ENCODE measurements at regions of chr3 and their contacts with region 1.

Region 1: DNA sequence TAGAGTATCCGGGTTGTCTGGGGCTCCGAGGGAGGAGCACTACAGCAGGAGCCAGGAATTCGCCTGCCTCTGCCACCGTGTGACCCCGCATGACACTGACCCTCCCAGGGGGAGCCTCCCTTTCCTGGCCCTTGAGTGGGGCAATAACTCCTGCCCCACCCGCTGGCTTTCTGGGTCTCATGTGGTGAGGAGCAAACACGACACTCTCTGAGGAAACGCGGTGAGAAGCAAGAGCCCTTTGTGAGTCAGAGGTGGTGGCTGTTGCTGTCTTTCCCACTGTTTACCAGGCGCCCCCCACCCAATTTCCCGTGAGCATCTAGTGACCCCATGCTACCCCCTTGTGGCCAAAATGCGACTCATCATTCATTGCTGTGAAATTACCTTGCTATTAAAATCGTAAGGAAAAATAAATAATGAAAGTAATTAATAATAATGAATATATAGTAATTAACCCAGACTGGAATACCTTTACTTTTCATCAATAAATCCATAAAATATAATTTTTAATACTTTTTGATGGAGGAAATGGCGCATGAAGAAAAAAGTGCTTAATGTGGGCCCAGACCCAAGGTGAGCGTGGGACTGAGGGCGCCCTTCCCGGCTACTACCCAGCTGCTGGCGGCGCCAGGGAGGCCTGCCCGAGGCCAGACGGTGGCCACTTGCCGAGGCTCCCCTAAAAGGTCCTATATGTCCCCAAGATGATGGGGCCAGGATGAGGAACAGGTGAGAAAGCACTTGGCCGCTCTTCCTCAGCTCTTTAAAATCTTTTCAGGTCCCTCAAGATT is 29.3 kb downstream of the CCNL1 start:
- DNase-seq: peak; percentile 94
- H3K4me3 ChIP-seq: no peak overlapping the region
- H3K27ac ChIP-seq: peak overlapping the region; percentile 94
- H3K4me1 ChIP-seq: peaks cover 27% of the 10 kb centered on the region
- H3K27me3 ChIP-seq: no peaks in the 10 kb centered on the region
- CTCF ChIP-seq: peak; percentile 56

Region 2: DNA sequence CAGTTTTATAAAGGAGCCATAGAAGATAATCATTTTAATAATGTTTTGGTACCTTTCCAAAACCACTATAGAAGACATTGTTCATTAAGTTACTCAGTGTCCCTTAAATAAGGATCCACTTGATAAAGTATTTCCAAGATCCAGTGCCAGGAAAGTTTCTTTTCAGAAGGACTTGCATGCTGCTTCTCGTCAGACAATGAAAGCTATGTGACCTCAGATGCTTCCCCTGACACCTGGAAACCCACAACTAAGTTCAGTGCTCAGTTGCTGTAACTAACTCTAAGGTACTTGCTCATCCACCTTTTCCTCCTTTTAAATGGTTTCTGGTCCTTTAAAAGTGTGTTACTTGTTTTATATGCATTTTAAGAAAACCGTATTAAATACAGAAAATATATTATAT is 583.0 kb before region 1 on chr3:
- intact Hi-C with region 1: loop called (anchors 10 kb)
- DNase-seq: no peak
- H3K4me3 ChIP-seq: no peak overlapping the region
- H3K27ac ChIP-seq: no peak overlapping the region
- H3K4me1 ChIP-seq: no peaks in the 10 kb centered on the region
- H3K27me3 ChIP-seq: no peaks in the 10 kb centered on the region
- CTCF ChIP-seq: no peak

Region 3: DNA sequence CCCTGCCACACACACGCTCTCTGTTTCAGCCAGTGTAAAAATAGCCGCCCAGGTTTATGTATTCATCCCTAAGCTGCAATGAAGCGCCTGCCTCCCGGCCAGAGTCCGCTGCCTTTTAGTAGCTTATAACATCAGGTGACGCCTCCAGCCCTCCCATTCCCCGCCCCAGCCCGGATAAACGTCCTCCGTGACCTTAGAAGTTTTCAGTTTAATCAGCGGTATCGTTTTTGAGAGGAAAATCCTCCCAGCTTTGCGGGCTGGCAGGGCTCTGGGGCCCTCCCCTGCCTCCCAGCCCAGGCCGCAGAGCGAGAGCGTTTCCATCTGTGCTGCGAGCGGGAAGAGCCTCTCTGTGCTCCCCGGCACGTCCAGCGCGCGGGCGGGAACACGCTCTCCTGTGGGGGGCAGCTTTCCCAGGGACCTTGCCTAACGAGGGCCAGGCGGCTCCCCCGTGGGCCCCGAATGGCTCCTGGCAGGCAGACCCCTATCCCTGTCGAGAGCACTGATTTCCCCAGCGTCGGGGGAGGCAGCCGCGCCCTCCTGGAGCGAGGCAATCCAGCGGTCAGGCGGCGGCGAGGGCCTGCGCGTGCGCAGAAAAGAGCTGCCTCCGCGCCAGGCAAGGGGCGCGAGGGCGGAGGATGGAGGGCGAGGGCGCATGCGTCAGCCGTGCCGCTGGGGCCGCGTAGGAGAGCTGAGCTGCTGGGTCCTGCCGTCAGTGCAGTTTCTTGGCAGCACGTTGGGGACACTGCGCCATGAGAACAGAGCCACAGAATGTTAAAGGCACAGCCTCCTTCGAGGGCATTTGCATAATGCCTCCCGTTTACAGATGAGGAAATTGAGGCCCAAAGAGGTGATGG is 41.8 kb before region 1 on chr3:
- intact Hi-C with region 1: loop called (anchors 2 kb)
- DNase-seq: peak; percentile 97
- H3K4me3 ChIP-seq: peak overlapping the region; percentile 61
- H3K27ac ChIP-seq: peak overlapping the region; percentile 100
- H3K4me1 ChIP-seq: peaks cover 8% of the 10 kb centered on the region
- H3K27me3 ChIP-seq: no peaks in the 10 kb centered on the region
- CTCF ChIP-seq: no peak

Region 4: GRCh38 chr3:157290766-157291165 is 160.1 kb after region 1 on chr3:
- intact Hi-C with region 1: no loop called
- DNase-seq: no peak
- H3K4me3 ChIP-seq: no peak overlapping the region
- H3K27ac ChIP-seq: no peak overlapping the region
- H3K4me1 ChIP-seq: no peaks in the 10 kb centered on the region
- H3K27me3 ChIP-seq: no peaks in the 10 kb centered on the region
- CTCF ChIP-seq: no peak

Region 5: DNA sequence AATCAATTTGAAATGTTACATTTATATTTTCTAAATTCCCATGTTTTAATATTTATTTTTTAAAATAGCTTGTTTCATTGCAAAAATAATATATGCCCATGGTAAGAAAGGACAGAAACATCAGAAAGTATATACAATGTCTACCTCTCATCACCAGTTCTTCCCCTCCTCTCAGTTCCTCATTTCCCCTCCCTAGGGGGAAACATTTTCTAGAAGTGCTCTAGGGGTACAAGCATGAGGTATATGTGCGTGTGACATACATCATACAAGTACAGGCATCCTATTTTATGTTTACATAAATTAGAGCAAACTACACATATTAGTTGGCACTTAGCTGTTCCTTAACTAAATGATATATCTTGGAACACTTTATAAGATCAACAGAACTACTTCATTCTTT is 561.8 kb after region 1 on chr3:
- intact Hi-C with region 1: no loop called
- DNase-seq: no peak
- H3K4me3 ChIP-seq: no peak overlapping the region
- H3K27ac ChIP-seq: no peak overlapping the region
- H3K4me1 ChIP-seq: no peaks in the 10 kb centered on the region
- H3K27me3 ChIP-seq: no peaks in the 10 kb centered on the region
- CTCF ChIP-seq: no peak

Measured in colonic mucosa (tissue), 4 donors.